ENCODE measurements at regions of chr3 and their contacts with region 1.

Region 1: DNA sequence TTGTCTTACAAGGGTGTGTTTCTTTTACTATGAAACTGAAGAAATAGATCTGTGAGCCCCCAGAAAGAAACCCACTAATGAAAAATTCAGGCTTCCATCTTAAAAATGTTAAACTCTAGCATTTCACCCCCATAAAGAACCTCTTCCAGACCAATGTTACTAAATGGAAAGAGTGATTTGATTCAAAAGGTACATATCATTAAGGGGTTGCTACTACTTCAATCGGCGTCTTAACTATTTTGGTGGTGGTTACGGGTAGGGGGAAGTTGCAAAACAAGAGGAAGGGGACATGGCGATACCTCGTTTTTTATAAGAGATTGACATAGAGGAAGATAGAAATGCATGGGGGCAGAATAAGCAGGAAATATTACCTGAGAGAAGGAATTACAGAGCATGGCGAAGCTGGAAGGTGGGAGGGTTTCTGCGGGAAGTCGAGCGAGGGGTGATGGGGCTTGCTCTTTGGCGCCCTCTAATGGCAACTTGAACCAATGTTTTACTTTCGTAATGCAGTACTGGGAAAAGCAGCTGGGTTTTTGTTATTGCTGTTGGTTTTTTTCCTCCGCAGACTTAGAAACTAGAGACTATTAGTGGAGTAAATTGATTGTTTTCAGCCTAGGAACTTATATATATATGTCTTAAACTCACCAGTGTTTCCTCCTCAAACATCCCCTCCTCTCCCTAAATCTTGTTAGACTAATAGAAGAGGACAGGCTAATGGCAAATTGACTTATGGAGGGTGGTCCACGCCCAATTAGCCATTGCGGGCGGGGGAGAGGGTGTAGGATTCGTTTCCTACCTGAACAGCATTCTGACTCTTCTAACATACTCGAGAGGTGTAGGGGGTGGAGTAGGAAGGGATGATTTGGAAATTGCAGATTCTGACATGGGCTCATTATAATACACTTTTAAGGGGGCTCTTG is 11.3 kb upstream of the SOX2 start:
- DNase-seq: peak in 1 of 2 experiments; percentile 83
- H3K4me3 ChIP-seq: peak overlapping the region; percentile 15 to 51 (median 21); a peak in 5 of 8 replicates
- H3K27ac ChIP-seq: no peak overlapping the region
- H3K4me1 ChIP-seq: peaks cover 21 to 40% (median 31%) of the 10 kb centered on the region in 4 experiments
- H3K27me3 ChIP-seq: peaks cover 6 to 46% (median 34%) of the 10 kb centered on the region in 4 experiments
- CTCF ChIP-seq: peak; percentile 70 to 91 (median 87)
- EP300 ChIP-seq: no peak
- POLR2A ChIP-seq: no peak
- RAD21 ChIP-seq: peak; percentile 69 to 77

Region 2: DNA sequence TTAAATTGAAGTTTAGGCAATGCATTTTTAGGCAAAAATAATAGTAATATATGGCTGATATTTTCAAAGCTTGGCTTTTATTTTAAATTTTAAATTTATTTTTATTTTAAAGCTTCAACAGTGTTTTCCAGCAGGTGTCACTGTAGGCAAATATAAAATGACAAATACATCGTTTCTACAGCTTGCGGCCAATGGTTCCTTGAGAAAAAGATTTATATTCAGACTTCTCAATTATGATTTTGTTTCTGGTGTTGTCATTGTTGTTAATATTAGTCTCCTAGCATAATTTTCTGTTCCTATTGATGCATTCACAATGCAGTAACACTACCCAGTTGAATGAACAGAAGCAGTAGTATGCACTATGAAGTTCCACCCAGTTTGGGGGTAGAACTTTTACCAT is 490.2 kb before region 1 on chr3:
- CTCF ChIA-PET with region 1: interaction called, 21 read pairs
- POLR2A ChIA-PET with region 1: no interaction called
- DNase-seq: no peak
- H3K4me3 ChIP-seq: no peak overlapping the region
- H3K27ac ChIP-seq: no peak overlapping the region
- H3K4me1 ChIP-seq: no peaks in the 10 kb centered on the region
- H3K27me3 ChIP-seq: no peaks in the 10 kb centered on the region
- CTCF ChIP-seq: peak in 2 of 3 experiments; percentile 14 to 20; a peak in 2 of 4 replicates
- EP300 ChIP-seq: no peak
- POLR2A ChIP-seq: no peak
- RAD21 ChIP-seq: peak; percentile 57 to 62

Region 3: GRCh38 chr3:181326637-181327223 is 373.7 kb before region 1 on chr3:
- CTCF ChIA-PET with region 1: interaction called, 38 read pairs
- POLR2A ChIA-PET with region 1: no interaction called
- DNase-seq: no peak
- H3K4me3 ChIP-seq: no peak overlapping the region
- H3K27ac ChIP-seq: no peak overlapping the region
- H3K4me1 ChIP-seq: peaks cover 0 to 2% (median 0%) of the 10 kb centered on the region in 4 experiments; a peak in 2 of 7 replicates
- H3K27me3 ChIP-seq: no peaks in the 10 kb centered on the region
- CTCF ChIP-seq: peak in 2 of 3 experiments; percentile 55 to 66; a peak in 2 of 4 replicates
- EP300 ChIP-seq: no peak
- POLR2A ChIP-seq: no peak
- RAD21 ChIP-seq: peak; percentile 71 to 79

Region 4: DNA sequence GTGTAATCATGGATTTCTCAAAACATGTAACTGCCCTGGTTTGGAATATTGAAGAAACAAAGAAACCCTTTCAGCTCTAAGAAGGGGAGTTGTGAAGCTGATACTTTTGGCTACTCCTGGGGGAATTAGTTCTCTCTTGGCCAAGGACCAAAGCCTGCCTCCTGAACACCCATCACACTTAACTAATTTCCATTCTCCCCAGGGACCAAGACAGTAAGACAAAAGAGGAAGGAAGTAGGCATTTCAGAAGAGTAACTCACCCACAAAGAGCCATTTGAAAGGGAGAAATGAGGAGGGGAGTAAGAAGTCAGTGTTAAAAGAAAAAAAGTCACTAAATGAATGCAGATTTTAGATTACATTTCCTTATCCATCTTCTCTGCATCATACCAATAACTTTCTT is 316.7 kb before region 1 on chr3:
- CTCF ChIA-PET with region 1: interaction called, 10 read pairs
- POLR2A ChIA-PET with region 1: no interaction called
- DNase-seq: no peak
- H3K4me3 ChIP-seq: peak overlapping the region in 1 of 4 experiments; percentile 17; a peak in 1 of 8 replicates
- H3K27ac ChIP-seq: no peak overlapping the region
- H3K4me1 ChIP-seq: peaks cover 2 to 10% (median 7%) of the 10 kb centered on the region in 4 experiments; a peak in 5 of 7 replicates
- H3K27me3 ChIP-seq: no peaks in the 10 kb centered on the region
- CTCF ChIP-seq: no peak
- EP300 ChIP-seq: no peak
- POLR2A ChIP-seq: no peak
- RAD21 ChIP-seq: no peak

Region 5: GRCh38 chr3:181578743-181579142 is 121.7 kb before region 1 on chr3:
- CTCF ChIA-PET with region 1: no interaction called
- POLR2A ChIA-PET with region 1: no interaction called
- DNase-seq: no peak
- H3K4me3 ChIP-seq: no peak overlapping the region
- H3K27ac ChIP-seq: no peak overlapping the region
- H3K4me1 ChIP-seq: no peaks in the 10 kb centered on the region
- H3K27me3 ChIP-seq: no peaks in the 10 kb centered on the region
- CTCF ChIP-seq: no peak
- EP300 ChIP-seq: no peak
- POLR2A ChIP-seq: no peak
- RAD21 ChIP-seq: no peak

Region 6: GRCh38 chr3:181683563-181683962 is 16.9 kb before region 1 on chr3:
- CTCF ChIA-PET with region 1: interaction called, 32 read pairs
- POLR2A ChIA-PET with region 1: interaction called, 3 read pairs
- DNase-seq: no peak
- H3K4me3 ChIP-seq: no peak overlapping the region
- H3K27ac ChIP-seq: no peak overlapping the region
- H3K4me1 ChIP-seq: peaks cover 0 to 8% (median 6%) of the 10 kb centered on the region in 4 experiments; a peak in 2 of 7 replicates
- H3K27me3 ChIP-seq: no peaks in the 10 kb centered on the region
- CTCF ChIP-seq: no peak
- EP300 ChIP-seq: no peak
- POLR2A ChIP-seq: no peak
- RAD21 ChIP-seq: no peak

Region 7: GRCh38 chr3:181718987-181719911 is 18.8 kb after region 1 on chr3:
- CTCF ChIA-PET with region 1: interaction called, 25 read pairs
- POLR2A ChIA-PET with region 1: interaction called, 11 read pairs
- DNase-seq: peak in 1 of 2 experiments; percentile 50
- H3K4me3 ChIP-seq: peak overlapping the region in 2 of 4 experiments; percentile 6 to 95; a peak in 2 of 8 replicates
- H3K27ac ChIP-seq: no peak overlapping the region
- H3K4me1 ChIP-seq: peaks cover 15 to 33% (median 25%) of the 10 kb centered on the region in 4 experiments
- H3K27me3 ChIP-seq: peaks cover 5 to 10% (median 7%) of the 10 kb centered on the region in 4 experiments; a peak in 6 of 7 replicates
- CTCF ChIP-seq: no peak
- EP300 ChIP-seq: no peak
- POLR2A ChIP-seq: peak in 1 of 2 experiments; percentile 73; a peak in 2 of 3 replicates
- RAD21 ChIP-seq: no peak

Region 8: DNA sequence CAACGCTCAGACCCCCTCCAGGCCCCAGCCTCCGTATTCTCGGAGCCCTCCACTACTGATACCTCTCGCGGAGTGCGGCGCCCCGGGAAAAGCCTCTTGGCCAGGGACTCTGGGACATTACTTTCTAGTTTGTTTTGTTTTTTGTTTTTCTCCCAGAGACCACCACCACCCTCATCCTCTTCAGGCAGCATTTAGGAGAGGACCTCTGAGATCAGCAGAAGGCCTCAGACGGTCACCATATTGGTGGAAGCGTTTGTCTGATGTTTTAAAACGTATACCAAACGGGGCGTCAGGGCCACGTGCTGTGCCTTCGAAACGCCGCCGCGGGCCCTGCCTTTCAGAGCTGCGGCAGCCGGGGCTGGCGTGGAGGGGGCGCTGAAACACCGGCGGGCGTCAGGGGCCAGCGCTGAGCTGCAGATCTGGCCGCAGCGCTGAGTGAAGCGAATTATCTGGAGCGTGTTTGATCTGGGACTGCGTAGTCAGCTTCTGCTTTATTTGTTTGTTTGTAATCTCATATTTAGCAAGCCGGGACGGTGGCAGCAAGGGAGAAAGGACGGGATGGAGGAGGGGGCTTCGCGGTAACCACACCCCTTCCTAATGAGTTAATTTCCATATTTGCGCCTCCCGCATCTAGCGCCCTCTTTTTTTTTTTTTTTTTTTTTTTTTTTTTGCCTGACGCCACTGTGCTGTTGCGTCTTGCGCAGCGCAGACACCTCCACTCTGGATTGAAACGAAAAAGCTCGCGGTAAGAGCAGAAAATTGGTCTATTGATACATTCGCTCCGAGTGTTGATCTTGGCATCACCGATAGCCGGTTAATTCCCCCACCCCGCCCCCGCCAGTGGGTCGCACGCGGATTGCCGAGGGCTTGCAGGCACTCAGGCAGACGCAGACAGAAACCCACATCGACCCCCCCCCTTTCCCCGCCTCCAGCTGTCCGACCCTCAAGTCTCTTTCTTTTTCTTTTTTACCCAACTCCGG is 26.2 kb after region 1 on chr3:
- CTCF ChIA-PET with region 1: interaction called, 28 read pairs
- POLR2A ChIA-PET with region 1: interaction called, 3 read pairs
- DNase-seq: peak in 1 of 2 experiments; percentile 84
- H3K4me3 ChIP-seq: peak overlapping the region; percentile 40 to 73 (median 53)
- H3K27ac ChIP-seq: no peak overlapping the region
- H3K4me1 ChIP-seq: peaks cover 17 to 51% (median 35%) of the 10 kb centered on the region in 4 experiments
- H3K27me3 ChIP-seq: peaks cover 6 to 31% (median 20%) of the 10 kb centered on the region in 4 experiments
- CTCF ChIP-seq: peak; percentile 54 to 65 (median 63)
- EP300 ChIP-seq: no peak
- POLR2A ChIP-seq: no peak
- RAD21 ChIP-seq: peak; percentile 70 to 84

Measured in H1 (cell line).